SK-N-SH (cell line): ENCODE measurements at regions of chr5 and their contacts with region 1.

Region 1: GRCh38 chr5:16690243-16690852 is 73.6 kb upstream of the RETREG1 start:
- DNase-seq: peak; percentile 76
- H3K4me3 ChIP-seq: no peak overlapping the region; a peak in 1 of 4 replicates
- H3K27ac ChIP-seq: no peak overlapping the region
- H3K4me1 ChIP-seq: peaks cover 0 to 11% of the 10 kb centered on the region in 2 experiments; a peak in 1 of 4 replicates
- H3K27me3 ChIP-seq: no peaks in the 10 kb centered on the region
- CTCF ChIP-seq: peak; percentile 77
- EP300 ChIP-seq: no peak
- RAD21 ChIP-seq: peak; percentile 65

Region 2: GRCh38 chr5:16673241-16674201 is 16.8 kb before region 1 on chr5:
- CTCF ChIA-PET with region 1: interaction called, 12 read pairs
- POLR2A ChIA-PET with region 1: no interaction called
- DNase-seq: no peak
- H3K4me3 ChIP-seq: no peak overlapping the region
- H3K27ac ChIP-seq: no peak overlapping the region
- H3K4me1 ChIP-seq: peaks cover 0 to 7% of the 10 kb centered on the region in 2 experiments; a peak in 2 of 4 replicates
- H3K27me3 ChIP-seq: no peaks in the 10 kb centered on the region
- CTCF ChIP-seq: no peak
- EP300 ChIP-seq: no peak
- RAD21 ChIP-seq: no peak

Region 3: GRCh38 chr5:16679863-16680262 is 10.5 kb before region 1 on chr5:
- CTCF ChIA-PET with region 1: interaction called, 12 read pairs
- POLR2A ChIA-PET with region 1: no interaction called
- DNase-seq: no peak
- H3K4me3 ChIP-seq: no peak overlapping the region
- H3K27ac ChIP-seq: no peak overlapping the region
- H3K4me1 ChIP-seq: no peaks in the 10 kb centered on the region
- H3K27me3 ChIP-seq: no peaks in the 10 kb centered on the region
- CTCF ChIP-seq: peak; percentile 27
- EP300 ChIP-seq: no peak
- RAD21 ChIP-seq: no peak